Thyroid gland (tissue), 4 donors: ENCODE measurements at regions of chr1 and their contacts with region 1.

Region 1: GRCh38 chr1:18575620-18576019 is 55.0 kb upstream of the PAX7 start:
- DNase-seq: peak; percentile 48 to 61
- H3K4me3 ChIP-seq: no peak overlapping the region
- H3K27ac ChIP-seq: no peak overlapping the region
- H3K4me1 ChIP-seq: no peaks in the 10 kb centered on the region
- H3K27me3 ChIP-seq: no peaks in the 10 kb centered on the region
- CTCF ChIP-seq: peak; percentile 51 to 74 (median 66)
- POLR2A ChIP-seq: no peak

Region 2: GRCh38 chr1:18200918-18201317 is 374.7 kb before region 1 on chr1:
- intact Hi-C with region 1: no loop called
- DNase-seq: no peak
- H3K4me3 ChIP-seq: no peak overlapping the region
- H3K27ac ChIP-seq: no peak overlapping the region
- H3K4me1 ChIP-seq: no peaks in the 10 kb centered on the region
- H3K27me3 ChIP-seq: no peaks in the 10 kb centered on the region
- CTCF ChIP-seq: no peak
- POLR2A ChIP-seq: no peak

Region 3: DNA sequence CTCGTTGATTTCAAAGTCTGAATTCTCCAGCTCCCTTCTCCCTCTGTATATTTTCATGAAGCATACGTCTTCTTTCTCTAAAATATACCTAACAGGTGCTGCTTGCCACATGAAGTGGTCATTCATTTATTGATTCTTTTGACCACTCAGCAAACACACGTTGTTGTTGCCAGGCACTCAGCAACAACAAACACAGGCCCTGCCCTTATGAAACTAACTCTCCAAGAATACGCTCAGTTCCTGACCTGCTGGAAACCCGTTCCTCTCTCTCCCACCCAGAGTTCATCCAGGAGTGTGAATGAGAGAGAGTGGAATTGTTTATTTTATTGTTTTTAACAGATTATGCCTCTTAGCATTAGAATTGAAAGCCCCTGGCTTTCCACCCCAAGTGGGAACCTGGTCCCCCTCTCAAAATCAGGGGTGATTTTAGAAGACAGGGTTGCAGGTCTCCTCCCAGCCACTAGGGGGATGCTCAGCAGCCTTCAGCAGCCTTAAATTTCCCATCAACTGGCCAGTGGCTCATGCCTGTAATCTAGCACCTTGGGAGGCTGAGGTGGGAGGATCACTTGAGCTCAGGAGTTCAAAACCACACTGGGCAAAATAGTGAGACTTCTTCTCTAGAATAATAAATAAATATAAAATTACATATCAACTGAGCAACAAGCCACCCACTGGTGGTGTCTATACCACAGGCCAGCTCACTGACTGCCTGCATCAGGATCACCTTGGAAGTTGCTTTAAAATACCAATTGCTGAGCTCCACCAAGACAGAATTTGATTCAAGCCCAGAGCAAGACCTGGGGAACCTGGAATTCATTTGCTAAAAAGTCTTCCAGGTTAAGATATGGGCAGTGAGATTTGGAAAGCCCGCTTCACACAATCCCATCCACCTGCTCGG is 275.9 kb before region 1 on chr1:
- intact Hi-C with region 1: loop called (anchors 5 kb)
- DNase-seq: peak; percentile 10 to 18
- H3K4me3 ChIP-seq: no peak overlapping the region
- H3K27ac ChIP-seq: no peak overlapping the region
- H3K4me1 ChIP-seq: no peaks in the 10 kb centered on the region
- H3K27me3 ChIP-seq: no peaks in the 10 kb centered on the region
- CTCF ChIP-seq: peak; percentile 18 to 77 (median 46)
- POLR2A ChIP-seq: no peak

Region 4: GRCh38 chr1:18440385-18441226 is 135.0 kb before region 1 on chr1:
- intact Hi-C with region 1: no loop called
- DNase-seq: no peak
- H3K4me3 ChIP-seq: no peak overlapping the region
- H3K27ac ChIP-seq: no peak overlapping the region
- H3K4me1 ChIP-seq: no peaks in the 10 kb centered on the region
- H3K27me3 ChIP-seq: no peaks in the 10 kb centered on the region
- CTCF ChIP-seq: no peak
- POLR2A ChIP-seq: no peak